ENCODE measurements at regions of chr2 and their contacts with region 1.

Region 1: GRCh38 chr2:230219419-230220331 is at the start of gene SP110:
- DNase-seq: peak; percentile 81 to 90 (median 84)
- H3K4me3 ChIP-seq: peak within 1 kb of the TSS; percentile 10 to 93 (median 64)
- H3K27ac ChIP-seq: peak within 1 kb of the TSS; percentile 57 to 88 (median 60)
- H3K4me1 ChIP-seq: peaks cover 6 to 21% of the 10 kb centered on the region in 2 donors
- H3K27me3 ChIP-seq: no peaks in the 10 kb centered on the region
- CTCF ChIP-seq: peak in 1 of 6 experiments; percentile 6
- POLR2A ChIP-seq: peak in 1 of 2 donors; percentile 39
- total RNA-seq, gene SP110: 14.1 to 37.9 (median 16.9) TPM

Region 2: GRCh38 chr2:230472621-230473018 is 252.9 kb after region 1 on chr2:
- intact Hi-C with region 1: loop called in 1 of 2 experiments (anchors 10 kb)
- DNase-seq: peak in 2 of 7 donors; percentile 25 to 62
- H3K4me3 ChIP-seq: no peak overlapping the region
- H3K27ac ChIP-seq: peak overlapping the region in 1 of 5 donors; percentile 10
- H3K4me1 ChIP-seq: no peaks in the 10 kb centered on the region
- H3K27me3 ChIP-seq: no peaks in the 10 kb centered on the region
- CTCF ChIP-seq: no peak
- POLR2A ChIP-seq: no peak